Left ventricle myocardium superior (tissue), 1 donor: ENCODE measurements at regions of chr2 and their contacts with region 1.

Region 1: GRCh38 chr2:224357098-224357901 is 44.6 kb downstream of the FAM124B start:
- DNase-seq: no peak
- ATAC-seq: peak; percentile 67

Region 2: DNA sequence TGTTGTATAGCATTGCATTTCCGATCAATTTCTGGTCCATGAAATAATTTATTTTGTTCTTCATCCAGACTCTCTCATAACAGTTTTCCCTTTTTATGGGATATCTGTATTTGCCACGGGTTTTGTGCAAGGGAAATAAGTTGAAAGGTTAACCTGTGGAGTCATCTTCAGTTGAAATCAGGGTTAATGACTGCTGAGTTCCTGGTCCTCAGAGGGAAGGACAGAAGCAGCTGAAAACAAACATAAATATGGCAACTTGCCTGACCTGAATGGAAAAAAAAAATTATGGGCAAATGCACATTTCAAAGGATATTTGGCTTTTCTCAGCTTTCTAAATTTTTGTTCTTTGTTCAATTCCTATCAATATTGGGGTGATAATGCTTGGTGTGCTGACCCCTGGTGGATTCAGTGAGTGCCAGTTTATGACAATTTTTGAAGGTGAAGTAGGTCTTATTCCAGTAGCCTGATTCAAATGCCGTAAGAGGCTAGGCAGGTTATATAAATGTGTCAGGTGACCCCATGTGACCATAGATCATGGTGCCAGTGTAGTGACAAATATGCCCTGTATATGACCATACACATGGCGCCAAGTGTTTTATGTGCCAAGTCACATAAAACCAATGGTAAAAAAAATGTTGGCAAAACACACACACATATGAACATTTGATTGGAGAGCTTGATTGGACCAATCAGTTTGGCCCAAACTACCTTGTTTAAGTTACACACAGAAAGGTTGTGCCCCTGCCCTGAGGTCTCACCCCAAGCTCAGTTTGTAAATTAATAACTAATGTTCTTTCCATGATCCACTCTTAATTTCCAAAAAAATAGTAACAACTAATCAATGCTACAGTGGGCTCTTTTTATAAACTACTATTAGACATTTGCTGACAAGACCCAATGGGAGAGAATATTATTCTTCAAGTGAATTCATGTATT is 92.2 kb after region 1 on chr2:
- intact Hi-C with region 1: loop called (anchors 5 kb)
- DNase-seq: no peak
- ATAC-seq: no peak

Region 3: GRCh38 chr2:224479826-224480225 is 122.5 kb after region 1 on chr2:
- intact Hi-C with region 1: no loop called
- DNase-seq: no peak
- ATAC-seq: no peak

Region 4: DNA sequence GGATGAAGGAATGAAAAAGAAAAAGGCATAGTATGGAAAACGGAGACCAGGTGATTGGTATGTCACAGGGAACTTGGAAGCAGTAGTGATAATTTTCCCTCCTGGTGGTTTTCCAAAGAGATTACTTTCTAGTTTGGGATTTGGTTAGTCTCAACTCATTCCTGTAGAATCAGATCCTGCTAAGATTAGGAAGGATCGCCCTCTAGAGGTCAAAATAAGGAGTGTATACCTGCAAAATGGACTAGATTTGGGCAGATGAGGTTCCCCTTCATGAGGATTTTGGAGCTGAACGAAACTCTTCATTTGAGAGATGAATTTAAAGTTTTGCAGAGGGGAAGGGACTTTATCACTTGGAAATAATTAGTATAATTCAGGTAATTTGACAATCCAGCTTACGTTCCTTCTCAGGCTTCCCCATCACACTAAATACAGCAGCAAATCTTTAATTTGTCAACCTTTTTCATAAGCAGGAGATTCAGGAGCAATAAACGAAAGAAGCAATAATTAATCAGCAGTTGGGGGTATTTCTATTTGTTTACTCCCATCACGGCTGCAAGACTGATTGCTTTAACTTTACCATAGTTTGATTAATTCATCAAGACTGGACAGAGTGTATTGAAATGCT is 293.6 kb after region 1 on chr2:
- intact Hi-C with region 1: loop called (anchors 2 kb)
- DNase-seq: no peak
- ATAC-seq: peak; percentile 57

Region 5: GRCh38 chr2:224778474-224778877 is 421.2 kb after region 1 on chr2:
- intact Hi-C with region 1: loop called (anchors 10 kb)
- DNase-seq: no peak
- ATAC-seq: no peak

Region 6: GRCh38 chr2:225697936-225698335 is 1340.6 kb after region 1 on chr2:
- intact Hi-C with region 1: no loop called
- DNase-seq: no peak
- ATAC-seq: no peak